ENCODE measurements at regions of chr3 and their contacts with region 1.

Region 1: DNA sequence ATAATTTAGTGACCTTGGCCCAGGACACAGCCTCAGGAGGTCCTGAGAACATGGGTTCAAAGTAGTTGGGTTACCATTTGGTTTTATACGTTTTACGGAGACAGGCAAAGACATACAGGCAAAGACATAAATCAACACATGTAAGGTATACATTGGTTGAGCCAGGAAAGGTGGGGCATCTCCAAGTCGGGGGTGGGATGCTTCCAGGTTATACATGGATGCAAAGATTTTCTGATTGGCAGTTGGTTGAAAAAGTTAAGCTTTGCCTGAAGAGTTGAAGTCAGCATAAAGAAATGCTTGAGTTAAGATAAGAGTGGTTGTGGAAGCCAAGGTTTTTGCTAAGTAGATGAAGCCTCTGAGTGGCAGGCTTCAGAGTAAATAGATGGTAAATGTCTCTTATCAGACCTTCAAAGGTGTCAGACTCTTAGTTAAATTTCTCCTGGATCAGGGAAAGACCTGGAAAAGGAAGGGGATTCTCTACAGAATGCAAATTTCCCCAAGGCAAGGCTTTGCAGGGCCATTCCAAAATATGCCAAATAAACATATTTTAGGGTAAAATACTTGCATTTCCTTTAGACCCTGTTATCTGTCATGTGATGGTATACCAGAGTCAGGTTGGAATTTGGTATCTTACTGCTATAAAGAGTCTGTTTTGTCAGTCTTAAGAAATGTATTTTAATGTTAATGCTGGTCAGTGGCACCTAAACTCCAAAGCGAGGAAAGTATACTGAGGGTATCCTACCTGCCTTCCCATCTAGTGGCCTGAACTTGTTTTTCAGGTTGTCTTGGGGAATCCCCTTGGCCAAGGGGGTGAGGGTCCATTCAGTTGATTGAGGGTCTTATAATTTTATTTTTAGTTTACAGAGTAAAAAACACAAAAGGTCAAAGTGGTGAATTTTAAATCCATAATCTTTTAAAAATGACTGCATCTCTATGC is 8.2 kb upstream of the PDHB start:
- DNase-seq: no peak
- ATAC-seq: no peak
- H3K4me3 ChIP-seq: no peak overlapping the region
- H3K27ac ChIP-seq: no peak overlapping the region
- H3K4me1 ChIP-seq: peaks cover 2% of the 10 kb centered on the region
- H3K27me3 ChIP-seq: no peaks in the 10 kb centered on the region
- CTCF ChIP-seq: no peak
- POLR2A ChIP-seq: no peak
- RAD21 ChIP-seq: no peak

Region 2: DNA sequence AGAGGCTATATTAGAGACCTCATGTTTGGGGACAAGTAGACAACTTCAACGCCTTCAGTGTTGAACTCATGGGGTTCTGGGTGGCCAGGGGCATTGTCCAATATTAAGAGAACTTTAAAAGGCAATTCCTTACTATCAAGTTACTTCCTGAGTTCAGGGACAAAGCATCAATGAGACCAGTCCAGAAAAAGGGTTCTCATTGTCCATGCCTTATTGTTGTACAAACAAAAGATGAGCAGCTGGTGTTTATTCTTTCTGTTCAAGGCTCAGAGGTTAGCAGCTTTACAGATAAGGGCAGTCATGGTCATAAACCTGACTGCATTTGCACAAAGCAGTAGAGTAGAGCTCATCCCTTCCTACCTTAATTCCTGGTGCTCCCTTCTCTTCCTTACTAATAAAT is 10.4 kb after region 1 on chr3:
- CTCF ChIA-PET with region 1: interaction called, 3 read pairs
- POLR2A ChIA-PET with region 1: no interaction called
- dilution Hi-C with region 1: no loop called
- in situ Hi-C with region 1: no loop called
- intact Hi-C with region 1: loop called (anchors 2 kb)
- DNase-seq: no peak
- ATAC-seq: no peak
- H3K4me3 ChIP-seq: no peak overlapping the region
- H3K27ac ChIP-seq: no peak overlapping the region
- H3K4me1 ChIP-seq: no peaks in the 10 kb centered on the region
- H3K27me3 ChIP-seq: peaks cover 5% of the 10 kb centered on the region; the same call in 1 of the 2 replicates
- CTCF ChIP-seq: no peak
- POLR2A ChIP-seq: no peak
- RAD21 ChIP-seq: no peak

Region 3: DNA sequence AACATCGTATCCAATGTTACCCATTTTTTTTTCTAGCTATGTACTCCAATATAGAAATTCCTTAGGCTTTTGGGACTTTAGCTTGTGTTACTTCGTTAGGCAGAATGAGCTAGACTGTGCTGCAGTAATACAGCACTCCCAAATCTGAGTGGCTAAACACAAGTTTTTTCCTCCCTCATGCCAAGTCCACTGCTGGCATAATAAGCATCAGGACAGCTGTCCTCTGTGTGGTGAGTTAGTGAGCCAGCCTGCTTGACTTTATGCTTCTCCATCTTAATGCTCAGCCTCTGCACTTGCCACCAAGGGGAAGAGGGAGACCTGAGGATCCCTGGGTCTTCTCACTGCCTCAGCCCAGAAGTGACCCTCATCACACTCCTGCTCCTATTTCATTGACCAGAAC is 113.4 kb after region 1 on chr3:
- CTCF ChIA-PET with region 1: no interaction called
- POLR2A ChIA-PET with region 1: no interaction called
- dilution Hi-C with region 1: no loop called
- in situ Hi-C with region 1: no loop called
- intact Hi-C with region 1: no loop called
- DNase-seq: no peak
- ATAC-seq: no peak
- H3K4me3 ChIP-seq: no peak overlapping the region
- H3K27ac ChIP-seq: no peak overlapping the region
- H3K4me1 ChIP-seq: no peaks in the 10 kb centered on the region; the same call in 1 of the 2 replicates
- H3K27me3 ChIP-seq: peaks cover 4% of the 10 kb centered on the region; the same call in 1 of the 2 replicates
- CTCF ChIP-seq: no peak
- POLR2A ChIP-seq: no peak
- RAD21 ChIP-seq: no peak

Measured in IMR-90 (cell line).